ENCODE measurements at regions of chr12 and their contacts with region 1.

Region 1: GRCh38 chr12:91109148-91109564 is 2.1 kb downstream of the LUM start:
- DNase-seq: peak; percentile 20
- ATAC-seq: peak; percentile 82
- H3K4me3 ChIP-seq: no peak overlapping the region
- H3K27ac ChIP-seq: no peak overlapping the region
- H3K4me1 ChIP-seq: no peaks in the 10 kb centered on the region
- H3K27me3 ChIP-seq: no peaks in the 10 kb centered on the region
- CTCF ChIP-seq: peak; percentile 54
- EP300 ChIP-seq: no peak
- POLR2A ChIP-seq: no peak
- RAD21 ChIP-seq: no peak

Region 2: DNA sequence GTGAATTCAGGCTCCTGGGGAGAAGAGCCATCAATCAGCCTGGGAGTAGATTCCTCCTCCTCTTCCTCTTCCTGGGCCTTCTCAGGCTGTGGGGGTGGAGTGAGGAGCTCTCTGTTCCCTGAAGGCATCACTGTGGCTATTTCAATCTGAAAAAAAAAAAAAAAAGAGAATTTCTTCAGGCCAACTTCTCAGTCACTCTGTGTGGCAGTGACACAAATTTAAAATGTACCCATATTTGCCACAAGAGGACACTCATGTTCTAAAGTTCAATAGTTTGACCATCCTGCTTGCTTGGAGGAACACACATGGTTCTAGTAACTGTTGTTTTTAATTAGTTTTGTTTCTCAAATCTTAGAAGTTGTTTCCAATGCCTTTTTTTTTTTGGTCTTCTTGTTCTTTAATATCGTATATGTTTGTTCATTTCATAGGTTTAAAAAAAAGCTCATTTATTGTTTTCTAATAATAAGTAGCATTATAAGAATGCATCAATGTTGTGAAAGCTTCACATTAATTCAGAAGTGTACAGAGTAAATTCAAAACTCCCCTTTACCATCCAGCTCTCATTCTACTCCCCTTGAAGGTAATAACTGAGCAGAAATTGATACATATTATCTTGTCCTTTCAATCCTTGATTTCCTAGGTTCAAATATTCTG is 130.9 kb before region 1 on chr12:
- CTCF ChIA-PET with region 1: interaction called, 6 read pairs
- POLR2A ChIA-PET with region 1: no interaction called
- in situ Hi-C with region 1: loop called (anchors 10 kb)
- intact Hi-C with region 1: loop called (anchors 1 kb)
- DNase-seq: peak; percentile 16
- ATAC-seq: peak; percentile 77
- H3K4me3 ChIP-seq: no peak overlapping the region
- H3K27ac ChIP-seq: no peak overlapping the region
- H3K4me1 ChIP-seq: no peaks in the 10 kb centered on the region
- H3K27me3 ChIP-seq: no peaks in the 10 kb centered on the region
- CTCF ChIP-seq: peak; percentile 64
- EP300 ChIP-seq: no peak
- POLR2A ChIP-seq: no peak
- RAD21 ChIP-seq: no peak

Region 3: DNA sequence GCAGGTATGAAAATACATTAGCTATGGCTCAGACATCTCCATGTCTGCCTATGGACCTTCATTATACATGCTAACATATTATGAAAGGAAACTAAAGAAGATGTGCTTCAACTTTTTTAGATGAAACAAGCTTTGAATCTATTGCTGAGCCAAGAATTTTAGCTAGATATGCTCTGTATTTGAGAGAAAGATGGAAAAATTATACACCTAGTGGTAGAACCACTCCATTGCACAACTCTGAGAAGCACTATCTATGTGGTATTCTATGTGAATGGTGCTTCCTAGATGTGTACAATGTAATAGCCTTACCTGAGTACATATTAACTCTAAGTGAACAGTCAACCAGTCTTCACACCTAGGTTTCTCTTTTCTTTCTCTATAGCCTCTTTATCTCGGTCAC is 121.6 kb before region 1 on chr12:
- CTCF ChIA-PET with region 1: no interaction called
- POLR2A ChIA-PET with region 1: no interaction called
- in situ Hi-C with region 1: loop called (anchors 10 kb)
- intact Hi-C with region 1: no loop called
- DNase-seq: no peak
- ATAC-seq: peak; percentile 47; the same call in 1 of the 3 replicates
- H3K4me3 ChIP-seq: no peak overlapping the region
- H3K27ac ChIP-seq: no peak overlapping the region
- H3K4me1 ChIP-seq: no peaks in the 10 kb centered on the region
- H3K27me3 ChIP-seq: no peaks in the 10 kb centered on the region
- CTCF ChIP-seq: no peak
- EP300 ChIP-seq: no peak
- POLR2A ChIP-seq: no peak
- RAD21 ChIP-seq: no peak

Region 4: DNA sequence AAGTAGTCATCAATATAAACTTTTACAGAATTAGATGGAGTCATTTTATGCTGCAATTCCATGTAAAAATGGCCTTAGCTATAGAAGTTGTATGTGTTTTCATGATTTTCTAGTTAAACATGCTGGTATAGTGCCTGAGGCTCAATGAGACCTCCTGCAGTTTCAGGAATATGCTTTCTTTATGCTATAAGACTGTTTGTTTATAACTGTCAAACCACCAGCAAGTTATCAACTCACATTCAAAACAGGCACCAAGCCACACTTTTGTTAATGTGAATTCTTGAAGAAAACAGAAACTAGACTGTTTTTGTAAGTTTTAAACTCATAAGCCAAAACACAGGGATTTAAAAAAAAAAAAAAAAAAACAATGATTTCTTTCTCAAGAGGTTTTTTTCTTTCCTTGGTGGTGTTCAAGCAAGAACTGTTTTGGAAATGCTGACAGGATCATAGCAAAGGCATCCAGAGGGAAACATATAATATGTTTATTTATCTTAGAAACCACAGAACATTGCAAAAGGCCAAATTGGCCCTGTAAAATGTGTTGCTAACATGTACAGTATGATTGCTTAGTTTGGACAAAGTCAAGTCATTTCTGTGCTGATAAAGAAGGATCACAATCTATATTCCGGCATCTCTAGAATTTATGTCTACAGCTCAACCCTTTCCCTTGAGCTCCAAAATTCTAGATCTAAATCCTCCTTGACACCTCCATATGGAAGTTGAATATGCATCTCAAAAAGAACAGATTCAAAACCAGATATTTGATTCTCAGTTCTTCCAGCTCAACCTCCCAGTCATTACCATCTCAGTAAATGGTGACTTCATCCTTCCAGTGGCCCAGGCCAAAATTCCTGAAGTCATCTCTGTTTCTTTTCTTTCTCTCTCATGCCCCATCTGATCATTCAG is 31.1 kb after region 1 on chr12:
- CTCF ChIA-PET with region 1: no interaction called
- POLR2A ChIA-PET with region 1: no interaction called
- in situ Hi-C with region 1: no loop called
- intact Hi-C with region 1: no loop called
- DNase-seq: no peak
- ATAC-seq: no peak
- H3K4me3 ChIP-seq: no peak overlapping the region
- H3K27ac ChIP-seq: no peak overlapping the region
- H3K4me1 ChIP-seq: no peaks in the 10 kb centered on the region
- H3K27me3 ChIP-seq: no peaks in the 10 kb centered on the region
- CTCF ChIP-seq: no peak
- EP300 ChIP-seq: no peak
- POLR2A ChIP-seq: no peak
- RAD21 ChIP-seq: no peak

Region 5: GRCh38 chr12:91204421-91204820 is 95.3 kb after region 1 on chr12:
- CTCF ChIA-PET with region 1: no interaction called
- POLR2A ChIA-PET with region 1: no interaction called
- in situ Hi-C with region 1: no loop called
- intact Hi-C with region 1: no loop called
- DNase-seq: no peak
- ATAC-seq: no peak
- H3K4me3 ChIP-seq: no peak overlapping the region
- H3K27ac ChIP-seq: no peak overlapping the region
- H3K4me1 ChIP-seq: no peaks in the 10 kb centered on the region
- H3K27me3 ChIP-seq: no peaks in the 10 kb centered on the region; a peak in 1 of 5 replicates
- CTCF ChIP-seq: no peak
- EP300 ChIP-seq: no peak
- POLR2A ChIP-seq: no peak
- RAD21 ChIP-seq: no peak